CD4-positive, alpha-beta memory T cell (primary cell): ENCODE measurements at regions of chr2 and their contacts with region 1.

Region 1: GRCh38 chr2:157336137-157337010 is 10.8 kb upstream of the ERMN start:
- DNase-seq: peak in 4 of 5 donors; percentile 40 to 53 (median 48)
- H3K4me3 ChIP-seq: no peak overlapping the region
- H3K4me3 Mint-ChIP-seq: peak overlapping the region; percentile 61 to 83 (median 75)
- H3K27ac ChIP-seq: no peak overlapping the region
- H3K27ac Mint-ChIP-seq: peak overlapping the region; percentile 19 to 87 (median 45)
- H3K4me1 ChIP-seq: peaks cover 43% of the 10 kb centered on the region
- H3K4me1 Mint-ChIP-seq: peaks cover 45 to 60% (median 51%) of the 10 kb centered on the region in 4 donors
- H3K27me3 ChIP-seq: no peaks in the 10 kb centered on the region
- H3K27me3 Mint-ChIP-seq: no peaks in the 10 kb centered on the region

Region 2: DNA sequence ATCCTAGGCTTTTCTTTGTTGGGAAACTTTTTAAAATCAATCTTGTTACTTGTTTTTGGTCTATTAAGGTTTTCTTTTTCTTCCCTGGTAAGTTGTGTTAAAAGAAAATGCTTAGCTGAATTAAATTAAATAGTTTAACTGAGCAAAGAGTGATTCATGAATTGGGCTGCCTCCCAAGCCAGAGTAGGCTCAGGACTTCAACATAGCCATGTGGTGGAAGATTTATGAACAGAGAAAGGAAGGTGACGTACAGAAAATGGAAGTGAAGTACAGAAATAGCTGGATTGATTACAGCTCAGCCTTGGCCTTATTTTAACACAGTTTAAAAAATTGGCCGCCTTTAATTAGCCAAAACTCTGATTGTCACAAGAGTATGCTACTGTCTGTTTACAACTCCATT is 106.8 kb before region 1 on chr2:
- CTCF ChIA-PET with region 1: no interaction called
- POLR2A ChIA-PET with region 1: no interaction called
- intact Hi-C with region 1: no loop called
- DNase-seq: no peak
- H3K4me3 ChIP-seq: no peak overlapping the region
- H3K4me3 Mint-ChIP-seq: peak overlapping the region in 1 of 8 donors; percentile 3
- H3K27ac ChIP-seq: no peak overlapping the region
- H3K27ac Mint-ChIP-seq: no peak overlapping the region
- H3K4me1 ChIP-seq: no peaks in the 10 kb centered on the region
- H3K4me1 Mint-ChIP-seq: no peaks in the 10 kb centered on the region
- H3K27me3 ChIP-seq: no peaks in the 10 kb centered on the region
- H3K27me3 Mint-ChIP-seq: peaks cover 2 to 7% of the 10 kb centered on the region in 2 donors

Region 3: DNA sequence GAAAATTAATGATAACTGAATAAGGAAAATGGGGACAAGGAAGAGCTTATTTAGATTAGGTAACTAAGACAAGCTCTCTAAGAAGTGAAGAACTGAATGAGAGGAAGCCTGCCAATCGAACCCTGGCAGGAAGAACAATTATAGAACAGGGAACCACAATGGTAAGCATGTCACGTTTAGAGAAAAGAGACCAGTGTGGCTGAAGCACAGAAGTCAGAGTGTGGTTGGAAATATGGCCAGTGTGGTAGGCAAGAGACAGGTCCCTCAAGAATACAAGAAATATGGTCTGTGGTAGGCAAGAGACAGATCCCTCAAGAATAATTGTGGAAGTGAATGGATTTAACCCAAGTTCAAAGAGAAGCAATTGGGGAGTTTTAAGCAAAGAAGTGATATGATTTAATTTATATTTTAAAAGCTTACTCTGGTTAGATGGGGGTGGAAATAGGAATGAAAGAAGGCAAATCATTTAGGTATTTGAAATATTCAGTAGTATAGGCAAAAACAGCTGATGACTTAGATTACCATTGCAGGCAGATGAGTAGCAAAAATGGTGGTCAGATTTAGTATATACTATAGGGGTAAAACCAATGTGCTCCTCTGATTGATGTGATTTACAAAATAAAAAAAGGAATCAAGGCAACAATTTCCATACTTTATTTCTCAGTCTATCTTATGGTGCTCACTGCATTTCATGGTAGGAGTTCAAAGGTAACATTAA is 28.0 kb after region 1 on chr2:
- CTCF ChIA-PET with region 1: interaction called, 11 read pairs
- POLR2A ChIA-PET with region 1: interaction called, 4 read pairs
- intact Hi-C with region 1: no loop called
- DNase-seq: no peak
- H3K4me3 ChIP-seq: no peak overlapping the region
- H3K4me3 Mint-ChIP-seq: peak overlapping the region in 5 of 8 donors; percentile 3 to 57 (median 46)
- H3K27ac ChIP-seq: no peak overlapping the region
- H3K27ac Mint-ChIP-seq: peak overlapping the region in 2 of 7 donors; percentile 49
- H3K4me1 ChIP-seq: peaks cover 25% of the 10 kb centered on the region
- H3K4me1 Mint-ChIP-seq: peaks cover 19 to 35% (median 25%) of the 10 kb centered on the region in 4 donors
- H3K27me3 ChIP-seq: no peaks in the 10 kb centered on the region
- H3K27me3 Mint-ChIP-seq: no peaks in the 10 kb centered on the region

Region 4: GRCh38 chr2:157395811-157396210 is 59.4 kb after region 1 on chr2:
- CTCF ChIA-PET with region 1: interaction called, 15 read pairs
- POLR2A ChIA-PET with region 1: no interaction called
- intact Hi-C with region 1: no loop called
- DNase-seq: no peak
- H3K4me3 ChIP-seq: no peak overlapping the region
- H3K4me3 Mint-ChIP-seq: no peak overlapping the region
- H3K27ac ChIP-seq: no peak overlapping the region
- H3K27ac Mint-ChIP-seq: no peak overlapping the region
- H3K4me1 ChIP-seq: no peaks in the 10 kb centered on the region
- H3K4me1 Mint-ChIP-seq: peaks cover 3 to 15% (median 11%) of the 10 kb centered on the region in 4 donors
- H3K27me3 ChIP-seq: no peaks in the 10 kb centered on the region
- H3K27me3 Mint-ChIP-seq: no peaks in the 10 kb centered on the region

Region 5: DNA sequence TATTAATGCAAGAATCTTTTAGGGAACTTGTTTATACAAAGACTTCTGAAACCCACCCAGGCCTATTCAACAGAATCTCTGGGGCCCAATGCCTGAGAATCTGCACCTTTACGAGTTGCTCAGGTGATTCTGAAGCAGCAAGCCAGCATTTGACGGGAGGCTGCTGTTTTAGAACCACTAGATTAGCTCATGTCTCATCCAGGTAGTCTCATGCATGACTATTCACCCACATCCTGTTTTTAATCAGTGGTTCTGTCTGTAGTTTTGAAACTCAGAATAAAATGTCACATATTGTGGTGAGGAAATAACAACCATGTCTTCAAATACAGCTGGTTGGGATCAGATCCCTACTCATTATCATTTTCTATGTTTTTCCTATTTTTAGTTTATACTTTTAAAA is 68.0 kb after region 1 on chr2:
- CTCF ChIA-PET with region 1: interaction called, 31 read pairs
- POLR2A ChIA-PET with region 1: interaction called, 58 read pairs
- intact Hi-C with region 1: loop called (anchors 2 kb)
- DNase-seq: peak; percentile 79 to 87 (median 85)
- H3K4me3 ChIP-seq: no peak overlapping the region
- H3K4me3 Mint-ChIP-seq: peak overlapping the region; percentile 49 to 85 (median 68)
- H3K27ac ChIP-seq: peak overlapping the region; percentile 51
- H3K27ac Mint-ChIP-seq: peak overlapping the region; percentile 95 to 100 (median 99)
- H3K4me1 ChIP-seq: peaks cover 60% of the 10 kb centered on the region
- H3K4me1 Mint-ChIP-seq: peaks cover 52 to 76% (median 63%) of the 10 kb centered on the region in 4 donors
- H3K27me3 ChIP-seq: no peaks in the 10 kb centered on the region
- H3K27me3 Mint-ChIP-seq: no peaks in the 10 kb centered on the region

Region 6: DNA sequence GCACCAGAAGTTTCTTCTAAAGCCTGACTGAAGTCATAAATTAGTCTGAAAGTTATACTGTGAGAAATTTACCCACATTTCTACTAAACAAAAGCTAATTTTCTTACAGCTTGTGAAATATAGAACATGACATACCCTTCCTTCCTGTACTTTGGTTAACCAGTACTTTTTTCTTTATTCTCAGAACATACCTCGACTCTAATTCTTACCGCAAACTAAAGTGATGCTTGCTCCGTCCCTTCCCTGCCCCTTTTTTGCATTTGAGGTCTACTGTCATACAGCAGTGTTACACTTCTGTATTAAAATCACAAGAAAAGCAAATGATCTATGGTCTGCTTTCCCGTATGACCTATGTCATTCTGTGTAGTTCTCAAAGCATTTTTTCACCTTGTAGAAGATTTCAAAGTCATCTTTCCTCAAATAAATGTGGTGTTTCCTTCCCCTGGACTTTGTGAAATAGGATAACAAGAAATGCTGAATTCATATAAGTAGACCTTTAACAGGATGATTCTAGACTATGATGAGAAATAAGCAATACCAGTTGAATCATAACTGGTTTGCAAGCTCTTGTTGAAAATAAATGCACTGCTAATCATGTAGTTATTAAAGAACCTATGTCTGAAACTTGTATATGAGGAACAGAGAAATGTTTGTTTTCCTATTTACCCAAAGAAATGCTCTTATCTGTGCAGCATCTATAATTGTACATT is 77.1 kb after region 1 on chr2:
- CTCF ChIA-PET with region 1: interaction called, 39 read pairs
- POLR2A ChIA-PET with region 1: interaction called, 25 read pairs
- intact Hi-C with region 1: loop called (anchors 2 kb)
- DNase-seq: peak; percentile 83 to 89 (median 86)
- H3K4me3 ChIP-seq: peak overlapping the region in 1 of 2 donors; percentile 9
- H3K4me3 Mint-ChIP-seq: peak overlapping the region; percentile 24 to 80 (median 71)
- H3K27ac ChIP-seq: peak overlapping the region; percentile 54
- H3K27ac Mint-ChIP-seq: peak overlapping the region; percentile 83 to 98 (median 91)
- H3K4me1 ChIP-seq: peaks cover 97% of the 10 kb centered on the region
- H3K4me1 Mint-ChIP-seq: peaks cover 69 to 91% (median 82%) of the 10 kb centered on the region in 4 donors
- H3K27me3 ChIP-seq: no peaks in the 10 kb centered on the region
- H3K27me3 Mint-ChIP-seq: no peaks in the 10 kb centered on the region

Region 7: DNA sequence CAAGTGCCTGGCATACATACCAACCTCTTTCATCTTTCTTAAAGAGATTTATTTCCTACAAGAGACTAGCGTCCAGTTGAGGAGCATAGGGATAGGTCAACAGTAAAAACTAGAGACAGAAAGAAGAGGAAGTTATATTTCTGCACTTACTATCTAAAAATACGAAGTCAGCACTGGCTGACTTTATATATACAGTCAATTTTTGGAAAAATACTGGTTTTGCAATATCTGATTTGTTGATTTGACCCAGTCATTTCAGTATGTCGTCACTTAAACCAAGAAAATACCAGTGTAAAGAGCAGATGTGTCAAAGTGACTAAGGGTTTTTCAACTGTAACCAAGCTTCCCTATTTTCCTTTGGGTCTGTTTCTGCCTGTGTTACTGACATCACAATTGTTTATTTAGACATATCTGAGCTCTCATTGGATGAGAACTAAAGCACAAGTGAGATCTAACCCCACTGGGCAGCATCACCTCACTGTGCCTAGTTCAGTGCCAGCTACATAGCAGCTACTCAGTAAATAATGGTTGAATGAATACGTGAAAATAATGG is 84.5 kb after region 1 on chr2:
- CTCF ChIA-PET with region 1: interaction called, 39 read pairs
- POLR2A ChIA-PET with region 1: interaction called, 25 read pairs
- intact Hi-C with region 1: loop called (anchors 2 kb)
- DNase-seq: peak in 1 of 5 donors; percentile 29
- H3K4me3 ChIP-seq: no peak overlapping the region
- H3K4me3 Mint-ChIP-seq: peak overlapping the region in 7 of 8 donors; percentile 31 to 82 (median 52)
- H3K27ac ChIP-seq: peak overlapping the region; percentile 36
- H3K27ac Mint-ChIP-seq: peak overlapping the region; percentile 83 to 97 (median 92)
- H3K4me1 ChIP-seq: peaks cover 87% of the 10 kb centered on the region
- H3K4me1 Mint-ChIP-seq: peaks cover 54 to 76% (median 67%) of the 10 kb centered on the region in 4 donors
- H3K27me3 ChIP-seq: no peaks in the 10 kb centered on the region
- H3K27me3 Mint-ChIP-seq: no peaks in the 10 kb centered on the region

Region 8: GRCh38 chr2:157427003-157427921 is 90.9 kb after region 1 on chr2:
- CTCF ChIA-PET with region 1: interaction called, 340 read pairs
- POLR2A ChIA-PET with region 1: interaction called, 375 read pairs
- intact Hi-C with region 1: no loop called
- DNase-seq: no peak
- H3K4me3 ChIP-seq: no peak overlapping the region
- H3K4me3 Mint-ChIP-seq: peak overlapping the region in 4 of 8 donors; percentile 14 to 52 (median 41)
- H3K27ac ChIP-seq: no peak overlapping the region
- H3K27ac Mint-ChIP-seq: peak overlapping the region; percentile 38 to 95 (median 73)
- H3K4me1 ChIP-seq: peaks cover 87% of the 10 kb centered on the region
- H3K4me1 Mint-ChIP-seq: peaks cover 46 to 82% (median 69%) of the 10 kb centered on the region in 4 donors
- H3K27me3 ChIP-seq: no peaks in the 10 kb centered on the region
- H3K27me3 Mint-ChIP-seq: no peaks in the 10 kb centered on the region

Region 9: DNA sequence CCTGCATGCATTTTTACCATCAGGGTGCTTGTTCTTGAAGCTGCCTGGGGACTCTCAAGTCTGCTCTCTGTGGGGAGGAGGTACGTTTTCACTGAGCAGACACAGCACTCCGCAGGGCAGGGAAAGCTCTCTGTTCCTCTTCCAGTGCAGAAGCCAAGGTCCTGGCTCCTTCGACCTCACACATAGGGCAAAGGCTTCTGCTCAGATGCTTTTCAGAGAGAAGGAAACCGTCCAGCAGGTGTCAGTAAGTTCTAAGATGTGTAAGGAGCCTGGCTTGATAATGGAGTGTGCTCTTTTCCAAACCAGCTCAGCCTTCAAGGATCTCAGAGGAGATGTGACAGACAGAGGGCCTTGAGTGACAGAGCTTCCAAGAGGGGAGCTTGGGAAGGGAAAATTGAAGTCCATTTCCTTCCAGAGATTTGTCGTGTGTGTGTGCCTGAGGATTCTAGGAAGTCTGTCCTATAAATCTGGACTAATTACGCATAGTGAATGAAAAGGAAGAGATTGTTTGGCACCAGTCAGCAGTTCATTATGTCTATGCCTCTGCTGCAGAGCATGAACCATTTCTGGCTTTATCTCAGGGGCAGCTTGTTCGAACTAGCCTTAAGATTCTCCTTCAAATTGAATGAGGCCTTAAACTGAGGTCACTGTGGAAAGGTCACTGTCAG is 698.0 kb after region 1 on chr2:
- CTCF ChIA-PET with region 1: no interaction called
- POLR2A ChIA-PET with region 1: no interaction called
- intact Hi-C with region 1: no loop called
- DNase-seq: peak in 3 of 5 donors; percentile 5 to 10 (median 9)
- H3K4me3 ChIP-seq: no peak overlapping the region
- H3K4me3 Mint-ChIP-seq: no peak overlapping the region
- H3K27ac ChIP-seq: no peak overlapping the region
- H3K27ac Mint-ChIP-seq: no peak overlapping the region
- H3K4me1 ChIP-seq: no peaks in the 10 kb centered on the region
- H3K4me1 Mint-ChIP-seq: no peaks in the 10 kb centered on the region
- H3K27me3 ChIP-seq: peaks cover 3% of the 10 kb centered on the region
- H3K27me3 Mint-ChIP-seq: peaks cover 11 to 21% of the 10 kb centered on the region in 2 donors